Upper lobe of right lung (tissue), 1 donor: ENCODE measurements at regions of chr14 and their contacts with region 1.

Region 1: GRCh38 chr14:50396631-50397390 is at the start of gene CDKL1:
- DNase-seq: peak; percentile 88
- ATAC-seq: peak; percentile 96
- H3K4me3 ChIP-seq: peak within 1 kb of the TSS; percentile 91
- H3K27ac ChIP-seq: peak within 1 kb of the TSS; percentile 93
- H3K4me1 ChIP-seq: peaks cover 21% of the 10 kb centered on the region
- H3K27me3 ChIP-seq: no peaks in the 10 kb centered on the region
- CTCF ChIP-seq: no peak
- total RNA-seq, gene CDKL1: 20.7 TPM

Region 2: DNA sequence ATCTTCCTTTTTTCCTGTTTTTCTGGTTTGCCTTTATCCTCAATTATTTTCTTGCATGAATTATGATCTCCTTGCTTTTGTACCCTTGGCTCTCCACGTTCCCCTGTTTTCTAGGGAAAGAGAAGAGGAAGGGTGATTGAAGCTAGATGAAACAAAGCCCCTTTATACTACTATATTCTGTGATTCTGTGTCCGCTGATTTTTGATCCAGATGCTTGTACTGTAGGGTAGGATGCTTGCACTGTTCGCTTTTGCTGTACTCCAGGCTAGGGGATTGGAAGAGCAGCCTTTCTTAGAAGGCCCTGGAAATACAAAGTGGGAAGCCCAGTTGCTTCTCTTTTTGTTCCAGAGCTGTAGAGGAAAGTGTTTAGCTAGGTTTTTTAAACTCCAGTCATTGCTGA is 663.9 kb before region 1 on chr14:
- intact Hi-C with region 1: no loop called
- DNase-seq: no peak
- ATAC-seq: no peak
- H3K4me3 ChIP-seq: no peak overlapping the region
- H3K27ac ChIP-seq: no peak overlapping the region
- H3K4me1 ChIP-seq: no peaks in the 10 kb centered on the region
- H3K27me3 ChIP-seq: no peaks in the 10 kb centered on the region
- CTCF ChIP-seq: no peak

Region 3: GRCh38 chr14:50301914-50302313 is 94.9 kb before region 1 on chr14:
- intact Hi-C with region 1: no loop called
- DNase-seq: no peak
- ATAC-seq: no peak
- H3K4me3 ChIP-seq: no peak overlapping the region
- H3K27ac ChIP-seq: no peak overlapping the region
- H3K4me1 ChIP-seq: peaks cover 9% of the 10 kb centered on the region
- H3K27me3 ChIP-seq: no peaks in the 10 kb centered on the region
- CTCF ChIP-seq: no peak

Region 4: DNA sequence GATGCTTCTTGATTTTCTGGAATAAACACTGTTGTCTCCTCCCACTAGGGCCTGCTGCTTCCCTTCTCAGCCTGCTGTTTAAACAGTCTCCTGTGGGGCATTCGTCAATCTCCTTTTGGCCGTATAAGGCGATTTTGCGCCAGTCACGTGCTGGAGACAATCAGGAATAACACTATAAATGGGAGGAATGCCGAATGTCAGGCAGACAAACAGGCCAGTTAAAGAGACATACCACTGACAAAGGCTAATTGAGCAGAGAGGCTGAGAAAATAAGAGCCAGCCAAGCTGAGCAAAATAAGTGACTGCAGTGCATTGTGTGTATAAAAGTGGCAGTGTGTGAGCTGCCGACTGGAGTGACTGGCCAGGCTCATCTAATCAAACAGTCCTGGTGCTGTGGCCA is 61.4 kb before region 1 on chr14:
- intact Hi-C with region 1: loop called (anchors 10 kb)
- DNase-seq: no peak
- ATAC-seq: peak; percentile 40
- H3K4me3 ChIP-seq: no peak overlapping the region
- H3K27ac ChIP-seq: peak overlapping the region; percentile 44
- H3K4me1 ChIP-seq: peaks cover 18% of the 10 kb centered on the region
- H3K27me3 ChIP-seq: no peaks in the 10 kb centered on the region
- CTCF ChIP-seq: no peak